ENCODE measurements at regions of chr1 and their contacts with region 1.

Region 1: GRCh38 chr1:84753516-84754385 is 63.5 kb upstream of the SSX2IP start:
- DNase-seq: peak; percentile 64 to 88
- H3K4me3 ChIP-seq: no peak overlapping the region
- H3K4me1 ChIP-seq: 0 out of 2 replicates have a peak, but pooled peaks cover 5% of the 10 kb centered on the region
- H3K27me3 ChIP-seq: no peaks in the 10 kb centered on the region

Region 2: GRCh38 chr1:84143796-84144565 is 609.8 kb before region 1 on chr1 and contains the start of gene PRKACB:
- in situ Hi-C with region 1: loop called (anchors 25 kb)
- DNase-seq: no peak
- H3K4me3 ChIP-seq: no peak within 1 kb of the TSS
- H3K4me1 ChIP-seq: no peaks in the 10 kb centered on the region
- H3K27me3 ChIP-seq: no peaks in the 10 kb centered on the region

Region 3: DNA sequence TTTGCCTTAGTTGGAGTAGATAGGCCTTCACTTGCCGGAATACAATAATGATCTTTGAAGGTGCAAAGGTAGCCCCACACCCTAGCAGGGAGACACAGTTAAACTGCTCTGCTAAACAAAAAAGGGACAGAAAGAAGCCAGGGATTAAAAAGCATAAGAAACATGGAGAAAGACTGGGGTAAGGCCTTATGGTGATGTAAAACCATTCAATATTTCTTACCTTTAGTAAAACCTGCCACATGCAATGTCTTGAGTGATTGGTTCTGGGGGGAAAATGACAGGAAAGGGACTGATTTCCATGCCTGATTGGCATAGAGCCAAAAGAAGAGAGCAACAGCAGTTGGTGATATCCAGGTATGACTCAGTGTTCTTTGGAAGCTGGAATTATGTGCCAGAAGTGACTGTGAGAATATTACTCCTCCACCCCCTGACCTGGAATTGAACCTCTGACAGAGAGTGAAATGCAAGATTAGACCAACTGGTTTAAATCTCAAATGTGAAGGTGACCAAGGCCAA is 347.3 kb before region 1 on chr1:
- in situ Hi-C with region 1: no loop called
- DNase-seq: no peak
- H3K4me3 ChIP-seq: no peak overlapping the region
- H3K4me1 ChIP-seq: no peaks in the 10 kb centered on the region
- H3K27me3 ChIP-seq: no peaks in the 10 kb centered on the region

Region 4: DNA sequence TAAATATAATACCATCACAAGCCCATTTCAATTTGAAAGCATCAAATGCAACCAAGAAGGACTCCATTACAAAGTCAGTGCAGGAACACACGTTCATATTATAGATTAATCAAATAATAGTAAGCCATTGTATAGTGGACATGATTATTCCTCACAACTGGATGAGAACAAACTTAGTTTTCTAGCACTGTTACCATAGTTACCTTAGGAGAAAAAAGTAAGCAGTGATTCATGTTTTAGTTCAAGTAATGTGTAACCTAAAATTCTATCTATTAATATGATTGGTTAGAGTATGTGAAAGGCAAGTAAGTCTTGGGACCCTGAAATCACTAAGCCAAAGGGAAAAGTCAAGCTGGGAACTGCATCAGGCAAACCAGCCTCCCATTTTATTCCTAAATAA is 78.6 kb before region 1 on chr1:
- in situ Hi-C with region 1: no loop called
- DNase-seq: no peak
- H3K4me3 ChIP-seq: no peak overlapping the region
- H3K4me1 ChIP-seq: peaks cover 7% of the 10 kb centered on the region; the same call in 1 of the 2 replicates
- H3K27me3 ChIP-seq: no peaks in the 10 kb centered on the region

Region 5: DNA sequence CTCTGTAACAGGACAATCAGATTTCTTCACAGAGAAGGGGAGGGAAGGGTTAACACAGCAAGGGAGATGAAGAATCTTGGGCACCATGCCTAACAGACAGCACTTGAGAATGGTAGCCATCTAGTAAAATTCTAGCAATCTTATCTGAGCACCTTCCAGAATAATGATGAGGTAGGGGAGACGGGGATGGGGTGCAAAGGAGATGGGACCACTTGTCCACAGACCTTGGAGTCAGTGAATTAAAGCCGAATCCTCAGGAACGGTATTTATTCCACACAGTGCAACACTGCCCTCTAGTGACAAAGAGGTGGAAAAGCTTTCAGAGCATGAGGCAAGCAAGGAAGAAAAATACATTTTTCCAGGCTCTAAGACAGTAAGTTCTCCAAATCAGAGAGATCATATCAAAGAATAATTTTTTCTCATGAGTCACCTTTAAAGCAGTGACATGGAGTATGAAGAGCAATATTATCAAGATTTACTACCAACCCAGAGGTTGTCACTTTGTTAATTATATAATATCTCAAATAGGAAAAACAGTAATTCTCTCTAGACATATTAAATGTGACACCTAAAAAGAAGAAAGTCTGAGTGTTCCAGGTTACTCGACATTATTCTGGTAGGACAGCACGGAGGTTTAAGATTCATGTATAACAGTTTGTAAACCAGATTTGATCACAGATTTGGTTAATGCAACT is 182.5 kb after region 1 on chr1:
- in situ Hi-C with region 1: no loop called
- DNase-seq: peak; percentile 41 to 71
- H3K4me3 ChIP-seq: no peak overlapping the region
- H3K4me1 ChIP-seq: no peaks in the 10 kb centered on the region; the same call in 1 of the 2 replicates
- H3K27me3 ChIP-seq: no peaks in the 10 kb centered on the region